ENCODE measurements at regions of chr4 and their contacts with region 1.

Region 1: DNA sequence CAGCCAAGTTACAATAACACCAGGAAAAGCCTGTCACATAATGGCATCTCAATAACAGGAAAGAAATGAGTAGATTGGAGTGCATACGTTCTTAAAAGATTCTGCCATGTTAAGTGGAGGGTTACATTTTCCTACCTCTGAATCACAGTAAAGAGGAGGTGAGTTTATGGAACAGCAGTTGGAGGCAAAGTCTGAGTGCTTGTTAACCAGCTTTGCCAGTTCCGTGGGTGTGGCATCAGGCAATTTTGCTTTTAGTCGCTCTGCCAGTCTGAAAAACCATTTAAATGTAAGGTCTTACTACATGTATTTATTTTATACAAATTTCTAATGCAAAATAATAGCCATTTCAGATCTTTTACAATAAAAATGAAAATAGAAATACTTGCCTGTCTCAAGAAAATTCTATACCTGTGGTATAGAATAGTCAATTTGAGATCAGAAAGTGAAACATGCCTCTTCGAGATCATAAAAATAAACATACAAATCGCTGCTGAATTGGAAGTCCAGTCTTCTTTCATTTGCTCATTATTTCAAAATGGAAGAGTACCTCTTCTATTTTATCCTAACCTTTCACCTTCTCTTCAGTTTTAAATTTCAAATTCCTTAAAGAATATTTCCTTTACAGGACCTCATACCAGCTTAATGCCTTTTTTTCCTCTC is 31.4 kb downstream of the GC start:
- DNase-seq: no peak
- H3K4me3 ChIP-seq: no peak overlapping the region
- CTCF ChIP-seq: no peak
- POLR2A ChIP-seq: no peak

Region 2: DNA sequence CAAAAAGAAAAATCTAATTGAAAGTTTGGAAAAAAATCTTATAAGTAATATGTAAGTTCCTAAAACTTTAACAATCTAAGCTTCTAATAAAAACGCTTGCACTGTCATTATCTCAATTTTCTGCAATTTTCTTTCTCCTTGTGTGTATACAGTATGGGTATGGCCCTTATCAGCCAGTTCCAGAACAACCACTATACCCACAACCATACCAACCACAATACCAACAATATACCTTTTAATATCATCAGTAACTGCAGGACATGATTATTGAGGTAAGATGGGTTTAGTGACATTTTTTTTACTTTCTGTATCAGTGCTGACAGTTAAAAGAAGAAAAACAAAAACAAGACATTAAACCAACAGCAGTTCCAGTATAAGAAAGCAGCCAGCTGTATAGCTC is 1751.8 kb before region 1 on chr4:
- intact Hi-C with region 1: loop called (anchors 5 kb)
- DNase-seq: no peak
- H3K4me3 ChIP-seq: no peak overlapping the region
- CTCF ChIP-seq: no peak
- POLR2A ChIP-seq: no peak

Region 3: DNA sequence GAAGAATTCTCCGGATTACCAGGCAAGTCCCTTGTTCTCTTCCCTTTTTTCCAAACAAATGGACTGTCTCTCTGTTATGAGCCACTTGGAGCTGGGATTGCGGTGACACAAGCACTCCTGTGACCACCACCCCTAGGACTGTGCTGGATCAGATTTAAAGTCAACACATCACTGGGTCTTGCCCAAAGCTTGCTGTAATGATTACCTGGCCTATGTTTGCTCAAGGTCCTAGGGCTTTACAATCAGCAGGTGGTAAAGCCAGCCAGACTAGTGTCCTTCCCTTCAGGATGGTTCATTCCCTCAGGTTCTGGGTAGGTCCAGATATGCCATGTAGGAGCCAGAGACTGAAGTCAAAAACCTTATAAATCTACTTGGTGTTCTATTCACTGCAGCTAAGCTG is 1172.3 kb after region 1 on chr4:
- intact Hi-C with region 1: no loop called
- DNase-seq: no peak
- H3K4me3 ChIP-seq: no peak overlapping the region
- CTCF ChIP-seq: no peak
- POLR2A ChIP-seq: no peak

Measured in lower leg skin (tissue), 4 donors.